Caco-2 (cell line): ENCODE measurements at regions of chr3 and their contacts with region 1.

Region 1: GRCh38 chr3:115692887-115693524 is 69.7 kb downstream of the GAP43 start:
- DNase-seq: peak; percentile 73 to 84
- H3K4me3 ChIP-seq: no peak overlapping the region
- H3K4me3 Mint-ChIP-seq: no peak overlapping the region
- H3K27ac Mint-ChIP-seq: no peak overlapping the region
- H3K4me1 ChIP-seq: no peaks in the 10 kb centered on the region
- H3K4me1 Mint-ChIP-seq: no peaks in the 10 kb centered on the region
- H3K27me3 ChIP-seq: no peaks in the 10 kb centered on the region
- H3K27me3 Mint-ChIP-seq: peaks cover 13% of the 10 kb centered on the region
- CTCF ChIP-seq: peak; percentile 77 to 79

Region 2: GRCh38 chr3:115040673-115041286 is 652.2 kb before region 1 on chr3:
- CTCF ChIA-PET with region 1: no interaction called
- POLR2A ChIA-PET with region 1: no interaction called
- intact Hi-C with region 1: loop called (anchors 2 kb)
- DNase-seq: peak; percentile 23 to 25
- H3K4me3 ChIP-seq: no peak overlapping the region
- H3K4me3 Mint-ChIP-seq: no peak overlapping the region
- H3K27ac Mint-ChIP-seq: no peak overlapping the region
- H3K4me1 ChIP-seq: no peaks in the 10 kb centered on the region
- H3K4me1 Mint-ChIP-seq: no peaks in the 10 kb centered on the region
- H3K27me3 ChIP-seq: no peaks in the 10 kb centered on the region
- H3K27me3 Mint-ChIP-seq: no peaks in the 10 kb centered on the region
- CTCF ChIP-seq: peak; percentile 54 to 61

Region 3: DNA sequence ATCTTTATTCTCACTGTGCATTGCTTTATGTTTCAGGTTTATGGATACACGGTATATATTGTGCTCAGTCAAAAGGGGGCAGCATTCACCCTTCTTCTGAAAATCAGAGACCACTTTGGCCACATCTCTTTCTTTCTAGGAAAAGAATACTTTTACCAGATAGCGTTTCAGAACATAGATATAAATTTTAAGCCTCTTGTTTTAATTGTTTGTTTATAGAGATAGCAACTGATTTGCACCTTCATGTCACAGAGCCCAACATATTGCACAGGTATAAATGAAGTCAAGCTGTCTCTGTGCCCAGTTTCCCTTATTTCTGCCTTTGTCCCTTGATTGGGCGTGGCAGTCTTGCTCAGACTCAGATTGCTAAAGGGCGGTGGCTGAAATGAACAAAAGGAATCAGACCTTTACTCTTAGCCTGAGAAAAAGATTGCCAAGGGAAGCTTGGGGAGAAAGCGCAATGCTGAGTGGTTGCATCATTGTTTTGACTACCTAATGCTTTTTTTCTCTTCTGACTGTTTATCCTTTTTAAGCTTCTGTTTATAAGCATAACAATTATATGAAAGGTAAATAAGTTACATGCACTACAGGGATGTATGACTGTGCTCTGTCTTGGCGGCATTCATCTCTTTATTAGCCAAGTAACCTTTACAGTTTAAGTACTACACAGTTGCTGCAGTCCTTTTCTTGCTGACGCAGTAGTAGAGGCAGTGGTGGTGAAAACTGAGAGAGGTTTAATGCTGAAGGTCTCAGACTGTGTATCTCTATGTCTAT is 475.1 kb before region 1 on chr3:
- CTCF ChIA-PET with region 1: no interaction called
- POLR2A ChIA-PET with region 1: no interaction called
- intact Hi-C with region 1: loop called (anchors 1 kb)
- DNase-seq: peak in 1 of 2 experiments; percentile 38
- H3K4me3 ChIP-seq: no peak overlapping the region
- H3K4me3 Mint-ChIP-seq: no peak overlapping the region
- H3K27ac Mint-ChIP-seq: no peak overlapping the region
- H3K4me1 ChIP-seq: no peaks in the 10 kb centered on the region
- H3K4me1 Mint-ChIP-seq: no peaks in the 10 kb centered on the region
- H3K27me3 ChIP-seq: no peaks in the 10 kb centered on the region
- H3K27me3 Mint-ChIP-seq: peaks cover 10% of the 10 kb centered on the region
- CTCF ChIP-seq: peak in 1 of 2 experiments; percentile 44

Region 4: GRCh38 chr3:115503394-115503793 is 189.6 kb before region 1 on chr3:
- CTCF ChIA-PET with region 1: no interaction called
- POLR2A ChIA-PET with region 1: no interaction called
- intact Hi-C with region 1: no loop called
- DNase-seq: no peak
- H3K4me3 ChIP-seq: no peak overlapping the region
- H3K4me3 Mint-ChIP-seq: no peak overlapping the region
- H3K27ac Mint-ChIP-seq: no peak overlapping the region
- H3K4me1 ChIP-seq: no peaks in the 10 kb centered on the region
- H3K4me1 Mint-ChIP-seq: no peaks in the 10 kb centered on the region
- H3K27me3 ChIP-seq: no peaks in the 10 kb centered on the region
- H3K27me3 Mint-ChIP-seq: no peaks in the 10 kb centered on the region
- CTCF ChIP-seq: no peak

Region 5: DNA sequence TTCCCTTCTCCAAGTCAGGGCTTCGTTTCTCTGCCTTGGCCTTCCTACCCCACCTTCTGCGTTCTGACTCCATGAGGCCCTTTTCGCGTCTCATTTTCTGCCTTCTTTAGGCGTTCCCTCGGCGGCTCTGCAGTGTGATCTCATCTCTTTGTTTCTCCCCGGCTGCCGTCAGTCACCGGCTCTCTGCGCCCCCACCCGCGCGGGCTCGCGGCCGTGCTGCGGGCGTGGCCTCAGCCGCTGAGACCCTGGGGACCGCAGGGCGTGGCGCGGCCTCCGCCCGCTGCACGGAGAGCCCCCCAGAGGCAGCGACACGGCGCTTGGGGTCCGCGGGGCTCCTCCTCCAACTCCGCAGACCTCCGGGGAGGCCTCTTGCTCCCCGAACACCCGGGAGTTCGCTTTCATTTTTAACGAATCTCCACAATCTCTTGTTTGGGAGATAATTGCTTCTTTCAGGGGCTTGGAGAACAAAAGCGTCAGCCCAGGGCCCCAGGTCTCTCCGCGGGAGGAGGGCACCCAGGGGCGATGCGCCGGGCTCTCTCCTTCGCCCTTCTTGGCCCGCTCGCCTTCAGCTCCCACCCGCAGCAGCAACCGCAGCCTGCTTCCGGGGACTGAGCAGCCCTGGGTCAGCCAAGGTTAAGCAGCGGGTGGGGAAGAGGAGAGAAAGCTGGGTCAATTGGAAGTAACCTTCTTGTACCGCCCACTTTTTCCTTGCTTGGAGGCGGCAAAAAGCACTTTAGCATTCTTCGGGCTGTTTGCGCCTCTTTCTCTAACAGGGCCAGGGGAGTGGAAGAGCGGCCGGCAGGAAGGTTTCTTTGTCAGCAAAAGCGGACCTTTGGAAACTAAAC is 34.4 kb before region 1 on chr3:
- CTCF ChIA-PET with region 1: no interaction called
- POLR2A ChIA-PET with region 1: no interaction called
- intact Hi-C with region 1: loop called (anchors 2 kb)
- DNase-seq: peak; percentile 43 to 57
- H3K4me3 ChIP-seq: peak overlapping the region; percentile 57
- H3K4me3 Mint-ChIP-seq: peak overlapping the region; percentile 96
- H3K27ac Mint-ChIP-seq: peak overlapping the region; percentile 71
- H3K4me1 ChIP-seq: no peaks in the 10 kb centered on the region
- H3K4me1 Mint-ChIP-seq: peaks cover 6% of the 10 kb centered on the region
- H3K27me3 ChIP-seq: no peaks in the 10 kb centered on the region
- H3K27me3 Mint-ChIP-seq: no peaks in the 10 kb centered on the region
- CTCF ChIP-seq: no peak

Region 6: GRCh38 chr3:115680803-115681345 is 12.1 kb before region 1 on chr3:
- CTCF ChIA-PET with region 1: no interaction called
- POLR2A ChIA-PET with region 1: no interaction called
- intact Hi-C with region 1: no loop called
- DNase-seq: no peak
- H3K4me3 ChIP-seq: no peak overlapping the region
- H3K4me3 Mint-ChIP-seq: no peak overlapping the region
- H3K27ac Mint-ChIP-seq: no peak overlapping the region
- H3K4me1 ChIP-seq: no peaks in the 10 kb centered on the region
- H3K4me1 Mint-ChIP-seq: no peaks in the 10 kb centered on the region
- H3K27me3 ChIP-seq: no peaks in the 10 kb centered on the region; the same call in 1 of the 2 replicates
- H3K27me3 Mint-ChIP-seq: peaks cover 18% of the 10 kb centered on the region
- CTCF ChIP-seq: no peak

Region 7: DNA sequence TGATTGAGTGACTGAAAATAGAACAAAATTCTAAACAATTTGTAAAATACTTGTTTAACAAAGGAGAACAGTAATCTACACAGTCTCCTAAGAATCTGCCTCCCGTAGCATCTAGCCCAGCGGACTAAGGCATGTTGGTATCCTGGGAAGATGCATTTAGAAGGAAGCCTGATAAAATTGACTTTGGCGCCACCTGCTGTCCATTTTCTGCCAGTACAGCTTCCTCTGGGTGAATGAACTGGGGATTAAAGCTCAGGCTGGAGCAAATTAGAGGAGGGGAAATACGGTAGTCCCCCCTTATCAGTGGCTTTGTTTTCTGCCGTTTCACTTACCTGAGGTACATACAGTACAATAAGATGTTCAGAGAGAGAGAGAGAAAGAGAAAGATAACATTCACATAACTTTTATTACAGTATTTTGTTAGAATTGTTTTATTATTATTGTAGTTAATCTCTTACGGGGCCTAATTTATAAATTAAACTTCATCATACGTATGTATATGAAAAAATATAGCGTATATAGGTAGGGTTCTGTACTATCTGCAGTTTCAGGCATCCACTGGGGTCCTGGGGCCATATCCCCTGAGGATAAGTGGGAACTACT is 121.9 kb after region 1 on chr3:
- CTCF ChIA-PET with region 1: interaction called, 3 read pairs
- POLR2A ChIA-PET with region 1: no interaction called
- intact Hi-C with region 1: loop called (anchors 1 kb)
- DNase-seq: peak; percentile 63 to 74
- H3K4me3 ChIP-seq: no peak overlapping the region
- H3K4me3 Mint-ChIP-seq: no peak overlapping the region
- H3K27ac Mint-ChIP-seq: no peak overlapping the region
- H3K4me1 ChIP-seq: no peaks in the 10 kb centered on the region
- H3K4me1 Mint-ChIP-seq: no peaks in the 10 kb centered on the region
- H3K27me3 ChIP-seq: no peaks in the 10 kb centered on the region
- H3K27me3 Mint-ChIP-seq: peaks cover 7% of the 10 kb centered on the region
- CTCF ChIP-seq: peak; percentile 82 to 83